ENCODE measurements at regions of chr9 and their contacts with region 1.

Region 1: GRCh38 chr9:20884985-20885593 is 146.4 kb downstream of the HACD4 start:
- DNase-seq: no peak

Region 2: DNA sequence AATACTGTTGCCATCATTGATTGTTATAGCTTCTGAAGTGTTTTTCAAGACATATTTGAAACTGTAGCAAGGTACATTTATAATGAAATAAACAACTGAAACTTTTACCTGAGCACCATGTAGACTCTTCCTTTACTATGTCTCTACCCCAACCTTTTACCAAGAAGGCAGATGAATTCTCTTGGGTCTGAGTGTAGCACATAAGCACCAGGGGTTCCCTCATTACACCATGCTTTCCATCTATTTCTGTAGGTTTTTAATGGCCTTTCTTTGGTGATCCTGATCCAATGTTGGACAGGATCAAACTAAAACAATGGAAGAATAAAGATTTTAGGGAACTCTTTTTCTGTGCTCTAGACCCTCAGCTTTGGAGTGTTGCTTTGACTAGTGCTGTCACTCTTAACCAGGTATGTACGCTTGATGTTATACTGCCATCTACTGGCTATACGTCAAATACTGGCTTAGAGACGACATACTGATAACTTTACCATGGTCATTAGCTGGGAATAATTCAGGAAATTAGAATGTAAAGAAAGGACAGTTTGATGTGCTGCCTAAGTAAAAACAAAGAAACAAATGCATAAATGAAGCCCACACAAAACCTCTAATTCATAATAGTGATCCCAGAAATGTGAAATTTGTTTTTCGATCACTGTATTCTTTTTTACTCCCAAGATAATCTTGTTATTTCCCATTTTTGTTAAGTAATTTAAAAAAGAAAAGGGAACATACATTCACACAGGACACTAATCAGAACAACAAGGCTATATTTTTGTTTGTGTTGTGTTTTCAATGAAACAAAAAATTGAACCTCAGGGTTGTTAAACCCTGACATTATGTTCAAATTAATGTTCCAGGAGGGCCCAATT is 225.9 kb after region 1 on chr9:
- intact Hi-C with region 1: loop called (anchors 10 kb)
- DNase-seq: no peak